ENCODE measurements at regions of chrX and their contacts with region 1.

Region 1: DNA sequence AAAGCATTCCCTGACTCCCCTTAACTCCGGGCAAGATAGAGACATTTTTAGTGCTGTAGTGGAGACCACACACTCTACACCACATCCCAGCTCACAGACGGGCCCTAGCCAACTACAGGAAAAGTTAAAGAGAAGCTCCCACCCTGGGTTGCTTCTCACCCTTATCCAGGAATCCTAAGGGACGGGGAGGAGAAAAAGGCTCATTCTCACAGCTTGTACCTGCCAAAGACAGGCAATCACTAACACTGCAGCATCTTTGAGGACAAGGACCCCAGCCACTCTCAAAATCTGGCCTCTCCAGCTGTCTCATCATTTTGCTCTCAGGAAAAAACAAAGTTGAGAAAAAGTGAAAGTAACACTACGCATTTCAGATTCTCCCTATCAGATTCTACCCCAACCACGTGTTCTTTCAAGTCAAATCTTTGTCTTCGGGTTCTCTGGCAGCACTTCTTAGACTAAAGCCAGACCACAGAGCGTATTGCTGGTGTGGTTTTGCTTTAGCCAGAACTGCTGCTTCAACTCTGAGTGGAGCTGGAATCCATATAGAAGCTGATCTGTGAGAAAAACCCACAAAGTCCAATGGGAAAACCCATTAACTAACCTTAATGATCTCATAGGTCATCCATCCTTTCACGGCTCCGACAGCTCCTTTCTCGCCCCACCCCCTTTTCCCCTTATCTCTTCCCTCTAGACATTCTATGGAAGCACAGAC is 605.9 kb upstream of the DIPK2B start:
- DNase-seq: peak; percentile 68
- H3K4me3 Mint-ChIP-seq: peak overlapping the region; percentile 64
- H3K27ac Mint-ChIP-seq: peak overlapping the region; percentile 95
- H3K4me1 Mint-ChIP-seq: peaks cover 85% of the 10 kb centered on the region
- H3K27me3 Mint-ChIP-seq: no peaks in the 10 kb centered on the region

Region 2: DNA sequence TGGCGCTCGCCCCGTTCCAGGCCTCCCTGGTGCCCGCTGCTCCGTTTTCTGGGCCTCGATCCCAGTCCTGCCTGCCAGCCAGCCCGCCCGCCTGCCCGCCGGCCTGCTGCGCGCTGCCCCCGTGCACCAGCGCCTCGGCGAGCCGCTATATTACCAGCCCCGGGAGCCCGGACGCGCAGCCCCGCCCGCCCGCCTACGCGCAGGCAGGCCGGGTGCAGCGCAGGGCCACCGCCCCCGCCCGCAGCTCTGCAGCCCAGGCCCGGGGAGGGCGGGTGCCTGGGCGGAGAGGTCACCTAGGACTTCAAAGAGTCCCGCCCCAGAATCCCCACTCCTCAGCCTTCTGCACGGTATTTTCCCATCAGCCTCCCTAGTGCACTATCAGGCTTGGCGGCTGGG is 1924.3 kb before region 1 on chrX and contains the start of gene MAOB:
- CTCF ChIA-PET with region 1: no interaction called
- POLR2A ChIA-PET with region 1: no interaction called
- intact Hi-C with region 1: no loop called
- DNase-seq: peak; percentile 38
- H3K4me3 Mint-ChIP-seq: no peak within 1 kb of the TSS
- H3K27ac Mint-ChIP-seq: no peak within 1 kb of the TSS
- H3K4me1 Mint-ChIP-seq: peaks cover 2% of the 10 kb centered on the region
- H3K27me3 Mint-ChIP-seq: peaks cover 16% of the 10 kb centered on the region
- total RNA-seq, gene MAOB: 0.19 to 0.27 TPM

Region 3: GRCh38 chrX:45540181-45540580 is 266.4 kb before region 1 on chrX:
- CTCF ChIA-PET with region 1: no interaction called
- POLR2A ChIA-PET with region 1: no interaction called
- intact Hi-C with region 1: no loop called
- DNase-seq: no peak
- H3K4me3 Mint-ChIP-seq: no peak overlapping the region
- H3K27ac Mint-ChIP-seq: no peak overlapping the region
- H3K4me1 Mint-ChIP-seq: peaks cover 2% of the 10 kb centered on the region
- H3K27me3 Mint-ChIP-seq: no peaks in the 10 kb centered on the region

Region 4: GRCh38 chrX:45769761-45770582 is 36.6 kb before region 1 on chrX:
- CTCF ChIA-PET with region 1: interaction called, 7 read pairs
- POLR2A ChIA-PET with region 1: interaction called, 25 read pairs
- intact Hi-C with region 1: loop called (anchors 1 kb)
- DNase-seq: peak; percentile 63
- H3K4me3 Mint-ChIP-seq: peak overlapping the region; percentile 84
- H3K27ac Mint-ChIP-seq: peak overlapping the region; percentile 95
- H3K4me1 Mint-ChIP-seq: peaks cover 54% of the 10 kb centered on the region
- H3K27me3 Mint-ChIP-seq: no peaks in the 10 kb centered on the region

Region 5: DNA sequence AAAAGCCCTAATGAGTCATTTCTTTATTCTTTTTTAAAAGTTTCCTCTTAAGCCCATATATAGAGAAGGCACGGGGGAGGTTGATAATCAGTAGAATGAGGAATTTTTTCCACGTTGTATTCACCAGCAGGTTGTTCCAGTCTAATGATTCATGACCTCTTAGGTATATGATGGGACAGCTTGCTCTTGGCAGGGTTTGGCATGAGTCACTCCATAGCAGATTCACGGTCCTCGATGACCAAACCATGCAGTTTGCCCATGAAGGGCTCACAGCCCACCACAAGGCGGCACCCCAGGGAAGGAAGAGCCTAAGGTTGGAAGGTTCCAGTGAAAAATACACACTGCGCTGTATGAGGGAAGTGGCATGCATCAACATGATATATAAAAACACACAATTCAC is 17.9 kb after region 1 on chrX:
- CTCF ChIA-PET with region 1: interaction called, 7 read pairs
- POLR2A ChIA-PET with region 1: interaction called, 4 read pairs
- intact Hi-C with region 1: loop called (anchors 1 kb)
- DNase-seq: peak; percentile 77
- H3K4me3 Mint-ChIP-seq: no peak overlapping the region
- H3K27ac Mint-ChIP-seq: peak overlapping the region; percentile 89
- H3K4me1 Mint-ChIP-seq: peaks cover 57% of the 10 kb centered on the region
- H3K27me3 Mint-ChIP-seq: no peaks in the 10 kb centered on the region

Region 6: GRCh38 chrX:45912316-45912715 is 105.8 kb after region 1 on chrX:
- CTCF ChIA-PET with region 1: no interaction called
- POLR2A ChIA-PET with region 1: no interaction called
- intact Hi-C with region 1: no loop called
- DNase-seq: no peak
- H3K4me3 Mint-ChIP-seq: no peak overlapping the region
- H3K27ac Mint-ChIP-seq: no peak overlapping the region
- H3K4me1 Mint-ChIP-seq: no peaks in the 10 kb centered on the region
- H3K27me3 Mint-ChIP-seq: no peaks in the 10 kb centered on the region

Region 7: DNA sequence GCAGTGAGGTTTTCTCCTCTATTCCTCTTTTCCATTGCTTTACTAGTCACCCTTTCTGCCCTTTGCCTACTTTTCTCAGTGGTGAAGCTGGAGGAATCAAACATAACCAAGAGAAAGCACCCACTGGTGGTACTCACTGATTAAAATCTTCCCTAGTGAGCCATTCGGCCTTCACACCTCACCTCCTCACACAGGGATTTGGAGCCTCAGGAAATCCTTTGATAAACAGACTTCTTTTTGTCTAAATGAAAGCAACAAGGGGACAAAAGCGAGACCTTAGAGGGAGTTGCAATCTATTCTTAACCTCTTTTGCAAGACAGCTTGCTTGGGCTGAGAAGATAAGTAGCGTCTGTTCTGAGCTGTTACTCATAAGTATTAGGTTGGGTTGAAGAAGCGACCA is 166.1 kb after region 1 on chrX:
- CTCF ChIA-PET with region 1: no interaction called
- POLR2A ChIA-PET with region 1: no interaction called
- intact Hi-C with region 1: no loop called
- DNase-seq: no peak
- H3K4me3 Mint-ChIP-seq: no peak overlapping the region
- H3K27ac Mint-ChIP-seq: no peak overlapping the region
- H3K4me1 Mint-ChIP-seq: no peaks in the 10 kb centered on the region
- H3K27me3 Mint-ChIP-seq: no peaks in the 10 kb centered on the region

Region 8: GRCh38 chrX:46376246-46376885 is 569.8 kb after region 1 on chrX:
- CTCF ChIA-PET with region 1: interaction called, 9 read pairs
- POLR2A ChIA-PET with region 1: no interaction called
- intact Hi-C with region 1: loop called (anchors 5 kb)
- DNase-seq: peak; percentile 47
- H3K4me3 Mint-ChIP-seq: no peak overlapping the region
- H3K27ac Mint-ChIP-seq: no peak overlapping the region
- H3K4me1 Mint-ChIP-seq: peaks cover 13% of the 10 kb centered on the region
- H3K27me3 Mint-ChIP-seq: no peaks in the 10 kb centered on the region